SK-N-SH (cell line): ENCODE measurements at regions of chr10 and their contacts with region 1.

Region 1: GRCh38 chr10:97278491-97278989 is 13.9 kb downstream of the ARHGAP19 start:
- DNase-seq: peak; percentile 61
- H3K4me3 ChIP-seq: no peak overlapping the region; a peak in 1 of 4 replicates
- H3K27ac ChIP-seq: peak overlapping the region; percentile 78 to 84
- H3K4me1 ChIP-seq: peaks cover 0 to 18% of the 10 kb centered on the region in 2 experiments
- H3K27me3 ChIP-seq: no peaks in the 10 kb centered on the region
- CTCF ChIP-seq: peak; percentile 79
- EP300 ChIP-seq: no peak
- RAD21 ChIP-seq: peak; percentile 70

Region 2: GRCh38 chr10:97259119-97259518 is 19.4 kb before region 1 on chr10:
- CTCF ChIA-PET with region 1: interaction called, 57 read pairs
- POLR2A ChIA-PET with region 1: no interaction called
- DNase-seq: no peak
- H3K4me3 ChIP-seq: no peak overlapping the region
- H3K27ac ChIP-seq: no peak overlapping the region
- H3K4me1 ChIP-seq: no peaks in the 10 kb centered on the region
- H3K27me3 ChIP-seq: no peaks in the 10 kb centered on the region
- CTCF ChIP-seq: no peak
- EP300 ChIP-seq: no peak
- RAD21 ChIP-seq: no peak

Region 3: DNA sequence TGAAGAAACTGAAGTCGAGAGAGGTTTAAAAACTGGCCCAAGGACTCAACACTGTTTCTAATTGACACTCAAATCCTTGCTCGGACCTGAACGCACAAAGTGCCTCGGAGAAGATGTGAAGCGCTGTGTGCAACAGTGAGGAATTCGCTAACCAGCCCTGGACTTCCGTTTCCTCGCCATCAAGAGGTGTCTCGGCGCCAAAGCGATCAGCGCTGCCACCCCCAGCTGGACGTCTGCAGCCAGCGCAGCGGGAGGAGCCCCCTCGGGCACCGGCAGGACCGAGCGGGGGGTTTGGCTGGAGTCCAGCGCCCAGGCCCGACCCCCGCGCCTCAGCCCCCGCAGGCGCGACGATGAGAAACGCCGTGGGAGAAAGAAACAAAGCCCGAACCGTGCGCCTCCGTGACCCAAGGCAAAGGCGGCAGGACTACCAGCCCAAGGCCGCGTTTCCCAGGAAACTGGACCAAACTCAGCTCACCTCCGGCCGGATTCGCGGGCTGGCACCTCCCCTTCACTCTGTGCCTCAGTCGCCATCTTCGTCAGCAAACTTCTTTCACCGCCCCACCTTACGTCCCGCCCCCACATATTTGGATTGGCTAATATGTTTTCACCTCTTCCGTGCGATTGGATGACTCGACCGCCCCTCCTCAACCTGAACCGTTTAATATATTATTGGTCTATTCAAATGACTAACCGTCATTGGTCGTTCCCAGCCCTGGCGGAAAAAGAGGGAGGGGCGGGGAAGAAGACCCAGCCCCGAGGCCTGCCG is 13.7 kb after region 1 on chr10 and contains the start of gene ARHGAP19:
- CTCF ChIA-PET with region 1: interaction called, 27 read pairs
- POLR2A ChIA-PET with region 1: interaction called, 6 read pairs
- DNase-seq: peak; percentile 92
- H3K4me3 ChIP-seq: peak within 1 kb of the TSS; percentile 63 to 86
- H3K27ac ChIP-seq: peak within 1 kb of the TSS; percentile 93 to 97
- H3K4me1 ChIP-seq: no peaks in the 10 kb centered on the region
- H3K27me3 ChIP-seq: no peaks in the 10 kb centered on the region
- CTCF ChIP-seq: peak; percentile 35
- EP300 ChIP-seq: no peak
- RAD21 ChIP-seq: no peak; the same call in 1 of the 2 replicates
- polyA plus RNA-seq, gene ARHGAP19: 3.8 and 4.5 TPM in 2 replicates

Region 4: DNA sequence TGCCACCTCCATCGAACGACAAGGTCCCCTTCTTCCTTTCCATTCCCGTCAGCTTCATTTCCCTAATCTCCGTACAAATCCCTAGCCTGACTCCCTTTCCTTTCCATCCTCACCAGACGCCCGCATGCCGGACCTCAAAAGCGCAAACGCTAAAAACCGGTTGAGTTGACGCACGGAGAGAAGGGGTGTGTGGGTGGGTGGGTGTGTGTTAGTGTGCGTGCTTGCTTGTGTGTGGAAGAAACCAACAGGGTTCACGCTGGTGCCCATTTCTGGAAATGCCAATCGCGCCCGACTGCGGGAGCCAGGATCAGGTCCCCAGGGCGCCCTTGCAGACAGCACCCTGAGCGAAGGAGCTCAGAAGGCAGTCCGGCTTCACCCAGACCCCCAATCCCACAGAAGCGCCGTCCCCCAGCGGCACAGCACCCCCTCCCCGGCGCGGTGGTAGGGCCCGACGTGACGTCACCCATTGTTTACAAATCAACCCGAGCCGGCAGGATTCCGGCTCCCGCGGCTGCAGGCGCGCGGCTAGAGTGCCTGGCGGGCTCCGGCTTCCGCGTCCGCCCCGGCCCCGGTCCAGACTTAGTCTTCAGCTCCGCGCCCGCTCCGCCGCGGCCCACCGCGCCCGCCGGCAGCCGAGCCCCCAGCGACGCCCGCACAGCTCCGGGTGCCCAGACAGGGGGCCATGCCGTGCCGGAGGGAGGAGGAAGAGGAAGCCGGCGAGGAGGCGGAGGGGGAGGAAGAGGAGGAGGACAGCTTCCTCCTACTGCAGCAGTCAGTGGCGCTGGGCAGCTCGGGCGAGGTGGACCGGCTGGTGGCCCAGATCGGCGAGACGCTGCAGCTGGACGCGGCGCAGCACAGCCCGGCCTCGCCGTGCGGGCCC is 40.5 kb after region 1 on chr10 and contains the start of gene FRAT1:
- CTCF ChIA-PET with region 1: interaction called, 15 read pairs
- POLR2A ChIA-PET with region 1: no interaction called
- DNase-seq: peak; percentile 89
- H3K4me3 ChIP-seq: peak within 1 kb of the TSS; percentile 67 to 82
- H3K27ac ChIP-seq: peak within 1 kb of the TSS; percentile 89 to 96
- H3K4me1 ChIP-seq: peaks cover 0 to 5% of the 10 kb centered on the region in 2 experiments; a peak in 1 of 4 replicates
- H3K27me3 ChIP-seq: no peaks in the 10 kb centered on the region
- CTCF ChIP-seq: no peak
- EP300 ChIP-seq: no peak; a peak in 1 of 4 replicates
- RAD21 ChIP-seq: no peak
- polyA plus RNA-seq, gene FRAT1: 1.3 and 1.8 TPM in 2 replicates

Region 5: DNA sequence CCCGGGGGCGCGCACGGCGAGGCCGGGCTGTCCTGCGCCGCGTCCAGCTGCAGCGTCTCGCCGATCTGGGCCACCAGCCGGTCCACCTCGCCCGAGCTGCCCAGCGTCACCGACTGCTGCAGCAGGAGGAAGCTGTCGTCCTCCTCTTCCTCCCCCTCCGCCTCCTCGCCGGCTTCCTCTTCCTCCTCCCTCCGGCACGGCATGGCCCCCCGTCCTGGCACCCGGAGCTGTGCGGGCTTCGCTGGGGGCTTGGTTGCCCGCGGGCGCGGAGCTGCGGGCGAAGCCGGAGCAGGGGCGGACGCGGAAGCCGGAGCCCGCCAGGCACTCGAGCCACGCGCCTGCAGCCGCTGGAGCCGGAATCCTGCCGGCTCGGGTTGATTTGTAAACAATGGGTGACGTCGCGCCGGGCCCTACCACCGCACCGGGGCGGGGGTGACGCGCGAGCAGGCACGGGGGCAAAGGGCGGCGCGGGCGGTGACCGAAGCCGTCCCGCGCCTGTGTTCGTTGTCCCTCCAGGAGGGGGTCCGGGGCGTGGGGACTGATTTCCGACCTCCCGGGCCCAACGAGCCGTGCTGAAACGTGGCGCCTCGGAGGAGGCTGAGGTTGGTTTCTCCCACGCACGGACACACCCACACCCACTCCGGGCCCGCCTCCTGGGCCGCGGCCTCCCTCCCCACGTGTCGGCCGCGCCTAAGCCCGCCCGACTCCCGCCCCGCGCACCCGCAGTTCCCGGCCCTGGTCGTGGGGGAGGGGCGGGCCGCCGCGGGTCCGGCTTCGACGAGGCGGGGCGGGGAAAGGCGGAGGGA is 56.0 kb after region 1 on chr10 and contains the start of gene FRAT2:
- CTCF ChIA-PET with region 1: interaction called, 31 read pairs
- POLR2A ChIA-PET with region 1: interaction called, 3 read pairs
- DNase-seq: peak; percentile 99
- H3K4me3 ChIP-seq: peak within 1 kb of the TSS; percentile 77 to 83
- H3K27ac ChIP-seq: peak within 1 kb of the TSS; percentile 76 to 97
- H3K4me1 ChIP-seq: peaks cover 0 to 21% of the 10 kb centered on the region in 2 experiments; a peak in 1 of 4 replicates
- H3K27me3 ChIP-seq: no peaks in the 10 kb centered on the region
- CTCF ChIP-seq: no peak
- EP300 ChIP-seq: peak in 1 of 2 experiments; percentile 57; a peak in 1 of 4 replicates
- RAD21 ChIP-seq: no peak
- polyA plus RNA-seq, gene FRAT2: 2.3 and 2.4 TPM in 2 replicates

Region 6: GRCh38 chr10:97355571-97355975 is 77.0 kb after region 1 on chr10:
- CTCF ChIA-PET with region 1: interaction called, 21 read pairs
- POLR2A ChIA-PET with region 1: no interaction called
- DNase-seq: no peak
- H3K4me3 ChIP-seq: no peak overlapping the region
- H3K27ac ChIP-seq: no peak overlapping the region
- H3K4me1 ChIP-seq: peaks cover 0 to 6% of the 10 kb centered on the region in 2 experiments; a peak in 1 of 4 replicates
- H3K27me3 ChIP-seq: no peaks in the 10 kb centered on the region
- CTCF ChIP-seq: peak; percentile 43
- EP300 ChIP-seq: no peak
- RAD21 ChIP-seq: peak; percentile 59

Region 7: GRCh38 chr10:97360695-97361536 is 82.4 kb after region 1 on chr10:
- CTCF ChIA-PET with region 1: interaction called, 21 read pairs
- POLR2A ChIA-PET with region 1: no interaction called
- DNase-seq: no peak
- H3K4me3 ChIP-seq: no peak overlapping the region
- H3K27ac ChIP-seq: no peak overlapping the region
- H3K4me1 ChIP-seq: peaks cover 0 to 6% of the 10 kb centered on the region in 2 experiments; a peak in 1 of 4 replicates
- H3K27me3 ChIP-seq: no peaks in the 10 kb centered on the region
- CTCF ChIP-seq: no peak
- EP300 ChIP-seq: no peak
- RAD21 ChIP-seq: no peak

Region 8: DNA sequence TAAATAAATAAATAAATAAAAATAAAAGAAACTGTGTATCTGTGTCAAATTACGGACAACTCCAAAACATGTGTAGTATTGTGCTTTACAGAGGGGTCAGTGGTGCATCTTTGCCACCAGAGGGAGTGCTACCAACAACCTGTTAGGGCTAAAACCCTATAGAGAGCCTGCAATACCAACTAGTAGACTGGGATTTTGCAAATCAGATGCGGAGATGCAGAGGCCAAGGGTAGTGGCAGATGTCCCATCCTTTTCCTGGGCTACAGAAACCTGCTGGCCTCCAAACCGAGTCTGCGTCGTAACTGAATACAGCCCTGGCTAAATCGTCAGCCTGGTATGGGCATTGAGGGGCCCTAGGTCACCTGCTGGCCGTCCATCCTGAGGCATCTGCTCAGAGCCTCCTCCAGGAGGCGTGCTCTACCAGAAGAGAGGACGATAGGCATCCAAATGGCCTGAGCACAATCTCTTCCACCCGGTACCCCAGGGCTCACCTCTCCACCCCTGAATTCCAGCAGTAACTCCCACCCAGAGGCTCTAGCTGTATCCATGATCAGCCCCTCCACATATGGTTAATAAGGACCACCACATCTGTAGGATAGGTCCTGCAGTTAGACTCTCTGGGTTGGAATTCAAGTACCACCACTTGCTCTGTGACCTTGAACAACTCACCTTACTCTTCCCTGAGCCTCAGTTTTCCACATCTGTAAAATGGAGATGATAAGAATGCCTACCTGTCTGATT is 128.8 kb after region 1 on chr10:
- CTCF ChIA-PET with region 1: no interaction called
- POLR2A ChIA-PET with region 1: no interaction called
- DNase-seq: peak; percentile 79
- H3K4me3 ChIP-seq: peak overlapping the region; percentile 28 to 56; a peak in 3 of 4 replicates
- H3K27ac ChIP-seq: peak overlapping the region in 1 of 2 experiments; percentile 31; a peak in 1 of 4 replicates
- H3K4me1 ChIP-seq: peaks cover 0 to 4% of the 10 kb centered on the region in 2 experiments; a peak in 1 of 4 replicates
- H3K27me3 ChIP-seq: no peaks in the 10 kb centered on the region
- CTCF ChIP-seq: peak; percentile 96
- EP300 ChIP-seq: no peak
- RAD21 ChIP-seq: peak; percentile 59